GM10248 (cell line): ENCODE measurements at regions of chr6 and their contacts with region 1.

Region 1: GRCh38 chr6:132279592-132280139 is 121.6 kb downstream of the MOXD1 start:
- DNase-seq: peak; percentile 65
- CTCF ChIP-seq: peak; percentile 77

Region 2: DNA sequence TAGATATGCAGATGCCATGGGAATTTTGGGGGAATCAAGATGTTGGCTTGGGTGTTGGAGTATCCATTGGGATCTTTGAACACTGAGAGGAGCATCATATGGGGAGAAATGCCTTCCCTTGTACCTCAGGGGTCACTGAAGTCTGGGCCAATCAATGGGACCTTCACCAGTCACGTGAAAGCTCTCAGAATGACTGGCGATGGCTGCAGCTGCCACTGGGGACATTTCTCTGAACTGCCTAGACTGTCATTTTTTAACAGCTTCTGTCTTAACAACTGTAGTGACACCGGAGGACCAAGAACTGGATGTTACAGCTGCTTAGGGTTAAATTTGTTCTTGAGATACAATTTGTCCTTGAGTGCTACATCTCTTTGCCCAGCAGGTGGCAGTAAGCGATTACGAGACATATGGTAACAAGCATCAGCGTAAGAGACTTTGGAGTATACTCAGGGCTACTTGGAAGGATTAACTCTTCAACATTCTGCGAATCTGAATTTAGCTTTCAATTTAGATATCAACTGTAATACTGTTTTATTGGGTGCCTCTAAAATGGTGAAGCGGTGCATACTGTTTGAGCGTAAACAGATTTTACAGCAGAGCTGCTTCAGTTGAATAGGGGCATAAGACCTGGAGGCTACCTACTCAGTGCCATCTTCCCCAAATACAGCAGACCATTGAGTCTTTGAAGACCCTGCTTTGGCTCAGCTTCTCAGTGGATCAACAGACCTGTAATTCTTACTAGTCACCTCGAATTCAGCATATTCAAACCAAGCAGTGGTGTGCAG is 364.5 kb before region 1 on chr6:
- CTCF ChIA-PET with region 1: interaction called, 15 read pairs
- POLR2A ChIA-PET with region 1: no interaction called
- DNase-seq: peak; percentile 51
- CTCF ChIP-seq: peak; percentile 82

Region 3: GRCh38 chr6:131995917-131996316 is 283.7 kb before region 1 on chr6:
- CTCF ChIA-PET with region 1: no interaction called
- POLR2A ChIA-PET with region 1: no interaction called
- DNase-seq: no peak
- CTCF ChIP-seq: no peak

Region 4: GRCh38 chr6:132265451-132266097 is 14.1 kb before region 1 on chr6:
- CTCF ChIA-PET with region 1: interaction called, 123 read pairs
- POLR2A ChIA-PET with region 1: no interaction called
- DNase-seq: no peak
- CTCF ChIP-seq: no peak

Region 5: DNA sequence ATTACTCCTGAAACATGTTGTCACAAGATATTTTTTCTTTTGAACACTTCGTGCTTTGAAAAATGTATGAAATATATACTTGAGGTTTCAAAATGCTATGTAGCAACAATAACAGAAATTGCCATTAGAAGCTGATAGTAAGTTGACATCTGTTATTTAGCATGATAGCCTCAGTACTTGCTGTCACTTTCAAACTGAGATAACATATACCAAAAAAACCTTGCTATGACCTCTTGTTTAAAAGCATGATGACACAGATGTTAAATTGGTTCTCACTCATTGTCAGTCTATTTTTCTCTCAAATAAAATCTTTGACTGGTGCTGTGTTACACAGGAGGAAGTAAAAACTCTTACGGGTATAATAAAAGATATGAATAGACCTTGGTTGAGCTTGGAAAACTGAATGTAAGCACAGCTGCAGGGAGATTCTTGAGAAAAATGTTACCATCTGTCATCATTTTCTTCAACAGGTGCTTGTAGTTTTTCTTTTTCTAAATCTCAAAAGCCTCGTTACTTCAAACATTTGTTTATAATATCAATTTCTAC is 103.0 kb after region 1 on chr6:
- CTCF ChIA-PET with region 1: interaction called, 13 read pairs
- POLR2A ChIA-PET with region 1: no interaction called
- DNase-seq: no peak
- CTCF ChIP-seq: no peak

Region 6: GRCh38 chr6:132471788-132472187 is 192.1 kb after region 1 on chr6:
- CTCF ChIA-PET with region 1: interaction called, 53 read pairs
- POLR2A ChIA-PET with region 1: no interaction called
- DNase-seq: no peak
- CTCF ChIP-seq: no peak

Region 7: GRCh38 chr6:132520953-132521352 is 241.3 kb after region 1 on chr6:
- CTCF ChIA-PET with region 1: interaction called, 13 read pairs
- POLR2A ChIA-PET with region 1: no interaction called
- DNase-seq: no peak
- CTCF ChIP-seq: no peak

Region 8: GRCh38 chr6:132798869-132799538 is 519.3 kb after region 1 on chr6:
- CTCF ChIA-PET with region 1: interaction called, 10 read pairs
- POLR2A ChIA-PET with region 1: no interaction called
- DNase-seq: peak; percentile 75
- CTCF ChIP-seq: peak; percentile 69